ENCODE measurements at regions of chr1 and their contacts with region 1.

Region 1: DNA sequence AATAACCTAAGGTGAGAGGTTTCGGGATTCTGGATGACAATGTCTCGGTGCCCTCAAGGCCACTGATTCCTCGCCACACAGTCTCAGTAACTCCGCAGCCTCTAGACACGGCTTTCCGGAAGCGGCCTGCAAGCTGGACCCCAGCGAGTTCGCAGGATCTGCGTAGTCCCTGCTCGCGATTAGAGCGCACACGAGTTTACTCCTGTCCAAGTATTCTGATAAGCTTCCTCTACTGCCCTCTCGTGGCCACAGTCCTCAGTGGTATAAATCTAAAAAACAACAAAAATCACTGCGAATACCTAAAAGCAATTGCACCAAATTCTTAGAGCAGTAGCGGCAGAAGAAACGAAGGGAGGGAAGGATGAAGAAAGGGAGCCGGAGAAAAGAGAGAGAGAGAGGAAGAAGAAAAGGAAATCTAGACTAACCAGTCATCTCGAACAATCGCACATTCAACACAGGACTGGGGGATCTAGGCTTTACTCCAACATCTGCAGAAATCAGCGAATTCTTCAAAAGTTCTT is 1.1 kb upstream of the PLXNA2 start:
- DNase-seq: peak; percentile 65 to 96 (median 86)
- H3K4me3 ChIP-seq: peak overlapping the region; percentile 57 to 90 (median 79)
- H3K27ac ChIP-seq: peak overlapping the region in 54 of 59 donors; percentile 14 to 96 (median 88)
- H3K27me3 ChIP-seq: peaks cover 0 to 26% (median 0%) of the 10 kb centered on the region in 45 donors
- CTCF ChIP-seq: peak; percentile 75 to 95 (median 90)

Region 2: GRCh38 chr1:208024406-208024805 is 220.8 kb before region 1 on chr1:
- intact Hi-C with region 1: loop called (anchors 2 to 5 kb)
- DNase-seq: no peak
- H3K4me3 ChIP-seq: no peak overlapping the region
- H3K27ac ChIP-seq: peak overlapping the region in 18 of 59 donors; percentile 10 to 75 (median 36)
- H3K27me3 ChIP-seq: peaks cover 0 to 6% (median 0%) of the 10 kb centered on the region in 45 donors
- CTCF ChIP-seq: no peak

Region 3: DNA sequence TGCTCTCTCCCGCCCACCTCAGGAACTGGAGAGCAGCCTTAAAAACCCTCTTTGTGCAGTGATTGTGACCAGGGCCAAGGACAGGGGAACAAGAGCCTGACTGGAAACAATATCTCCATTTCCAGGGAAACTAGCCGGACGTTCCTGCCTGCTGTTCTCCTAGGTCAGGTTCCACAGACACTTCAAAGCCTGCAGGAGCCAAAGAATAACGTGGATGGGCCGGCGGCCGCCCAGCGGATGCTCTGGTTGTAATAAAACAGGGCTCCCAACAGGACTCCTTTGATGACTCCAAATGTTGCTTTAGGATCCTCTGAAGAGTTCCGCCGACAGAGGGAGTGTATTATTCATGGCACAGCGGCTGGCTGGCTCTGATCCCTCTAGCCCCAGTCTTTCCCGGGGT is 163.3 kb before region 1 on chr1:
- intact Hi-C with region 1: loop called (anchors 2 to 5 kb)
- DNase-seq: peak in 3 of 10 donors; percentile 47 to 55 (median 55)
- H3K4me3 ChIP-seq: peak overlapping the region in 19 of 59 donors; percentile 3 to 40 (median 15)
- H3K27ac ChIP-seq: peak overlapping the region in 40 of 59 donors; percentile 4 to 67 (median 45)
- H3K27me3 ChIP-seq: no peaks in the 10 kb centered on the region
- CTCF ChIP-seq: peak in 52 of 56 donors; percentile 16 to 71 (median 55)

Region 4: DNA sequence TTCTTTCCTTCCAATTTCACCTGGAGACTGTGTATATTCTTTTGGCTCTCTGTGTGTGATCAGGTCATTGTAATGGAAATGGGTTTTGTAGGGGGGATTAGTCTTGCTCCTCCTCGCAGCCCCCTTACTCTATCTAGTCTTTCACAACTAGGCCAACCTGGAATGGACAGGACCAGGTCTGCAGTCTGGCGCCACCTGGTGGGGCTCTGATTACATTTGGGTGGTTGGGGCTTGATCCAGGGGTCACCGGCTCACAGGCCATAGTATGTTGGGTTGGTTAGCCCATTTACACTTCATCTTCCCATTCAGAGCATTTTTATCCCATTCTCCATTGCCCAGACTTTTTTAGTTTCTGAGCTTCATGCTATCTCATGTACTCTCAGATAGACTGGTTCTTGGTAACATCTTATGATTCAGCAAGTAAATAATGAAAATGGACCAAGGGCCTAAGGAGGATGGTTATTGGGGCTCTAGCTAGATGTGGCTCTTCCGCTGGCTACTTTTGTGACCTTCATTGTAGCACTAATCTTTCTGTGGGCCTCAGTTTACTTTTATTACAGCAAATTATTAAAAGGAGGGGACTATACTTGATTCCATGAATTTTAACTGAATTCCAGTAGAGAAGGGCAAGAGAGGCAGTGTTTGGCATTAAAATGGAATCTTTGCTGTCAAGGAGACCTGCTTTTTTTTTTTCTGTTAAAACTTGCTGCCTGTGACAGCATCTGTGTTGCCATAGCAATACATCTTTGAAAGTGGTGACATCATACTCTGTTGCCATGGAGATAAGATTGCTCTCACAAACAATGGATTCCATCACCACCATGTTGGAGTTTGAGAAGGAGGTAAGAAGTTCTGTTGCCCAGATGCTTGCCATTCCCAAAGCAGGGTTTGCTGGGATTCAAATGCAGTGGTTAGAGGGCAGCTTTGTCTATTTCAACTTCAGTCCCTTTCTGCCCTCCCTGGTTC is 151.2 kb before region 1 on chr1:
- intact Hi-C with region 1: loop called in 1 of 2 experiments (anchors 5 kb)
- DNase-seq: peak in 5 of 10 donors; percentile 47 to 70 (median 68)
- H3K4me3 ChIP-seq: no peak overlapping the region
- H3K27ac ChIP-seq: no peak overlapping the region
- H3K27me3 ChIP-seq: no peaks in the 10 kb centered on the region
- CTCF ChIP-seq: peak; percentile 26 to 83 (median 68)